Natural killer cell (primary cell): ENCODE measurements at regions of chr1 and their contacts with region 1.

Region 1: DNA sequence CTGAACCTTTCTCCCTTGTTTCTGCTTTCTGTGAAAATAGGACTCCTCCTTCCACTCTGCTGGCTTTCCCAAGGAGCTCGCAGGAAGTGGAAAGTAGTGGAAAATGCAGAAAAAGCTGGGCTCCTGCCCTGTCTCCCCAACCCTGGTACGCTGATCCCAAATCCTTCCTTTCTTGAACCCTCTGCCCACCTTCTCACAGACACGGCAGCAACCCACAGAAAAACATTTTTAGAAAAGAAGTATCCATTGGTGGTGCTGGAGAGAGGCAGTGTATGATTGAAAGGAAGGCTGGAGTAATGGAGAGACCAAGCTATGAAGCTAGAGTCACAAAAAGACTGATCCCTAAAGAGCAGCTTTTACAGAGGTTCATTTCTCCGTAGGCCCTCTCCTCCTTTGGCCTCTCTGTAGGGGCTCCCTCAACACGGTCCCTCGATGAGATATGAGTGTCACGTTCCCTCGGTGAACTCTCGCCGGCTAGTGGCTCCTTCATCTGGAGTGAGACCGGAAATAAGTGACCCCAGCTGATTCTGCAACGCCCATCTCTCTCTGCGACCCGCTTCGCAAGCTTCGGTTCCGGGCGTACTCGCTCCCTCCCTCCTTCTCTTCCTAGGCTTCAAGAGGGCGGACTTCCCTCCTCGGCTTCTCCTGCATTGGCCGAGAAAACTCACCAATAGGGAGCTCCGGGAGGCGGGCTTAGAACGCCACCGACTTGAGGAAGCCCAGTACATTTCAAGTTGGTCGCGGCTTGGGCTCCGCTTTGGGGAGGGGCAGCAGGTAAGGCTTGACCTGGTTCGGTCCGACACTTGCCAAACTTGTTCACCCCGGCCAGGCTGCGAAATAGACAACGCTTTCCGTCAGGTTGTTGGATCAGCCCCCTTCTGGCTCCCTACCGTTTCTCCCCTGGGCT is at the starts of genes ANKRD34A and POLR3GL:
- DNase-seq: peak; percentile 87 to 94
- ATAC-seq: peak; percentile 90 to 98 (median 94)
- H3K4me3 ChIP-seq: peak within 1 kb of the TSS; percentile 68
- H3K4me3 Mint-ChIP-seq: peak within 1 kb of the TSS; percentile 94
- H3K27ac ChIP-seq: peak within 1 kb of the TSS; percentile 81
- H3K27ac Mint-ChIP-seq: peak within 1 kb of the TSS; percentile 87 to 95
- H3K4me1 ChIP-seq: peaks cover 48% of the 10 kb centered on the region
- H3K4me1 Mint-ChIP-seq: peaks cover 55 to 65% of the 10 kb centered on the region in 2 donors
- H3K27me3 ChIP-seq: no peaks in the 10 kb centered on the region
- H3K27me3 Mint-ChIP-seq: no peaks in the 10 kb centered on the region
- CTCF ChIP-seq: no peak
- total RNA-seq, gene ANKRD34A: 1.4 to 1.9 (median 1.4) TPM
- total RNA-seq, gene POLR3GL: 34.9 to 37.5 (median 37.4) TPM

Region 2: GRCh38 chr1:145845514-145846161 is 118.6 kb before region 1 on chr1 and contains the start of gene NUDT17:
- intact Hi-C with region 1: loop called (anchors 5 kb)
- DNase-seq: peak; percentile 74 to 88
- ATAC-seq: peak; percentile 86 to 89 (median 87)
- H3K4me3 ChIP-seq: peak within 1 kb of the TSS; percentile 68
- H3K4me3 Mint-ChIP-seq: no peak within 1 kb of the TSS
- H3K27ac ChIP-seq: peak within 1 kb of the TSS; percentile 44
- H3K27ac Mint-ChIP-seq: no peak within 1 kb of the TSS
- H3K4me1 ChIP-seq: peaks cover 20% of the 10 kb centered on the region
- H3K4me1 Mint-ChIP-seq: no peaks in the 10 kb centered on the region
- H3K27me3 ChIP-seq: no peaks in the 10 kb centered on the region
- H3K27me3 Mint-ChIP-seq: no peaks in the 10 kb centered on the region
- CTCF ChIP-seq: peak; percentile 88
- total RNA-seq, gene NUDT17: 3.3 to 4.9 (median 3.4) TPM

Region 3: DNA sequence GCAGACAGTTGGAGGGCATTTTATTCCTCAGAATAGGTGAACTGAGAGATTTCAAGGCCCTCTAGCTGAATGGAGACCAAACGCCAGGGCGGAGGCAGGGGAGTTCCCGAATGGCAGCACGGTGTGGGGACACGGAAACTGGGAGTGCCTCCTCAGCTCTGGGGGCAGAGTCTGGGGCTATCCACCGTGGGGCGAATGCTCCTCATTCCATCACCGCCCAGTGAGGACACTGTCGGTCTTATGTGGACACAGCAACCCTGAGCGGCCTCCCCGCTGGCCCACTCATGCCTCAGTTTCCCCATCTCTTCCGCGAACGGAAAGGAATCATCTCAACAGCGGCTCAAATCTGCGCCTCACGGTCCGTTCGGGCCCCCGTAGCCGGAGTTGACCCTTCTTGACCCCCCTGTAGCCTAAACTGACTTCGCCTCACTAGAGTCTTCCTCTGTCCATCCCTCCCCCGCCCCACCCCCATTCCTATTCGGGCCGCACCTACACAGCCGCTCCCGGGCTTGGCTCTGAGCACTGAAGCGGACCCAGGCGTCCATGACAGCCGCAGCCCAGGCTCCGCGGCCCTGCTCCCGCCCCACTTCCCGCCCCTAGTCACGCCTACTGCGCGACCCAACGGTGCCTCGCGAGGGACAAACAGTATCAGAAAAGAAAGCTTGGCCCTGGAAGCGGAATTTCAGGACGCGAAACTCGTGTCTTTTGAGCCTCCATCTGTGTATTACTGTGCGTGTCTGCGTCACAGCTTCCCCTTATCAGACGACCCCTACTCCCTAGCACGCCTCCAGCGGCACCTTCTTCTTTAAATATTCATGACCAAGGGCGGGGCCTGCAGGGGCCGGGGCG is 45.9 kb before region 1 on chr1 and contains the start of gene PEX11B:
- intact Hi-C with region 1: loop called (anchors 2 kb)
- DNase-seq: peak; percentile 90 to 96
- ATAC-seq: peak; percentile 89 to 96 (median 89)
- H3K4me3 ChIP-seq: peak within 1 kb of the TSS; percentile 65
- H3K4me3 Mint-ChIP-seq: peak within 1 kb of the TSS; percentile 95
- H3K27ac ChIP-seq: peak within 1 kb of the TSS; percentile 82
- H3K27ac Mint-ChIP-seq: peak within 1 kb of the TSS; percentile 91 to 92
- H3K4me1 ChIP-seq: peaks cover 22% of the 10 kb centered on the region
- H3K4me1 Mint-ChIP-seq: peaks cover 33 to 43% of the 10 kb centered on the region in 2 donors
- H3K27me3 ChIP-seq: no peaks in the 10 kb centered on the region
- H3K27me3 Mint-ChIP-seq: no peaks in the 10 kb centered on the region
- CTCF ChIP-seq: no peak
- total RNA-seq, gene PEX11B: 20.6 to 26.0 (median 24.9) TPM

Region 4: DNA sequence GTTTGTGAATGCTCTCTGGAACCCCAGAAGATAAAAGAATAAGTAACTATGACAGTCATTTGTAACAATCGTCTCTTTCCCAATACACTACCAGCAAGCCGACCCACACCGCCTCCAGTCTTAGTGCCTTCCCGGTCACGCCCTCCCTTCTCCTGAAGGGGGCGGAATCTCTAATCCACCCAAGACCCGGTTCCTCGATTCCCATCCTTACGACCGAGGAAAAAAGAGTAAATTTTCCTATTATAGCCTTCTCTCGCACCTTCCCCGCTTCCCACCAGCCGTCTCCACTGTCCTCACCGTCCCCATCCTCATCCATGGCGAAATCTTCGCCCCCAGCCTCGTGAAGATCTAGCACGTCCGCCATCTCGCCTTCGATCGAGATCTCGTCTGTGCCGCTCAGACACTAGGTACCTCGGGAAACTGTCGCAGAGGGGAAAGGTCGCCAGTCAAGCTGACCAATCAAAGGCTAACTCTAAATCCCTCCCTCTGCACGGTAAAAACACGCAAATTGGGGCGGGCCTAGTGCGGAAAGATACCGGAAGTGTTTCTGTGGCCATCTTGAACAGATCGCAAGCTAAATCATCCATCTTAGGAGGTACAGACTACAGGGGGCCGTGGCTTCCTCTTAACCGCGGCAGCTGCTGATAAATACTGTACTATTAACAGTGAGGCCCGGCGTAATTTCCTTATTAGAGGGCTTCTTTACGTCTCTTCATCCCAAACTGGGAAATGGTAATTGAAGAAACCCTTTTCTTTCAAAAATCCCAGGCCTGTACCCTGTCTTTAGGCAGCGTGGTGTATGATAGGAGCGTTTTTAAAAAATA is 37.0 kb before region 1 on chr1 and contains the start of gene RBM8A:
- intact Hi-C with region 1: loop called (anchors 2 kb)
- DNase-seq: peak; percentile 87 to 99
- ATAC-seq: peak; percentile 96 to 99 (median 96)
- H3K4me3 ChIP-seq: peak within 1 kb of the TSS; percentile 64
- H3K4me3 Mint-ChIP-seq: no peak within 1 kb of the TSS
- H3K27ac ChIP-seq: peak within 1 kb of the TSS; percentile 100
- H3K27ac Mint-ChIP-seq: no peak within 1 kb of the TSS
- H3K4me1 ChIP-seq: peaks cover 25% of the 10 kb centered on the region
- H3K4me1 Mint-ChIP-seq: peaks cover 14 to 20% of the 10 kb centered on the region in 2 donors
- H3K27me3 ChIP-seq: no peaks in the 10 kb centered on the region
- H3K27me3 Mint-ChIP-seq: no peaks in the 10 kb centered on the region
- CTCF ChIP-seq: peak; percentile 73
- total RNA-seq, gene RBM8A: 172 to 204 (median 200) TPM

Region 5: GRCh38 chr1:145996433-145997015 is 32.3 kb after region 1 on chr1 and contains the start of gene TXNIP:
- intact Hi-C with region 1: loop called (anchors 5 kb)
- DNase-seq: peak; percentile 91 to 95
- ATAC-seq: peak; percentile 85 to 97 (median 95)
- H3K4me3 ChIP-seq: peak within 1 kb of the TSS; percentile 64
- H3K4me3 Mint-ChIP-seq: peak within 1 kb of the TSS; percentile 97
- H3K27ac ChIP-seq: peak within 1 kb of the TSS; percentile 88
- H3K27ac Mint-ChIP-seq: peak within 1 kb of the TSS; percentile 97 to 99
- H3K4me1 ChIP-seq: peaks cover 48% of the 10 kb centered on the region
- H3K4me1 Mint-ChIP-seq: peaks cover 71 to 76% of the 10 kb centered on the region in 2 donors
- H3K27me3 ChIP-seq: no peaks in the 10 kb centered on the region
- H3K27me3 Mint-ChIP-seq: no peaks in the 10 kb centered on the region
- CTCF ChIP-seq: no peak
- total RNA-seq, gene TXNIP: 984 to 1,724 (median 1,422) TPM

Region 6: GRCh38 chr1:146036965-146037646 is 72.9 kb after region 1 on chr1:
- intact Hi-C with region 1: loop called (anchors 5 kb)
- DNase-seq: peak; percentile 69 to 87
- ATAC-seq: peak; percentile 29 to 60 (median 42)
- H3K4me3 ChIP-seq: peak overlapping the region; percentile 63
- H3K4me3 Mint-ChIP-seq: peak overlapping the region; percentile 97
- H3K27ac ChIP-seq: peak overlapping the region; percentile 56
- H3K27ac Mint-ChIP-seq: peak overlapping the region; percentile 99
- H3K4me1 ChIP-seq: peaks cover 37% of the 10 kb centered on the region
- H3K4me1 Mint-ChIP-seq: peaks cover 44 to 49% of the 10 kb centered on the region in 2 donors
- H3K27me3 ChIP-seq: no peaks in the 10 kb centered on the region
- H3K27me3 Mint-ChIP-seq: peaks cover 6 to 16% of the 10 kb centered on the region in 2 donors
- CTCF ChIP-seq: no peak